ENCODE measurements at regions of chr22 and their contacts with region 1.

Region 1: GRCh38 chr22:22030493-22031182 is 48.1 kb upstream of the TOP3B start:
- DNase-seq: peak; percentile 80
- ATAC-seq: peak; percentile 80
- H3K4me3 ChIP-seq: peak overlapping the region in 4 of 5 experiments; percentile 31 to 51 (median 45)
- H3K4me3 Mint-ChIP-seq: peak overlapping the region; percentile 91
- H3K27ac ChIP-seq: peak overlapping the region; percentile 70 to 75
- H3K27ac Mint-ChIP-seq: peak overlapping the region; percentile 97
- H3K4me1 ChIP-seq: peaks cover 56 to 69% of the 10 kb centered on the region in 2 donors
- H3K4me1 Mint-ChIP-seq: peaks cover 77% of the 10 kb centered on the region
- H3K27me3 ChIP-seq: no peaks in the 10 kb centered on the region
- H3K27me3 Mint-ChIP-seq: no peaks in the 10 kb centered on the region
- CTCF ChIP-seq: peak; percentile 67

Region 2: DNA sequence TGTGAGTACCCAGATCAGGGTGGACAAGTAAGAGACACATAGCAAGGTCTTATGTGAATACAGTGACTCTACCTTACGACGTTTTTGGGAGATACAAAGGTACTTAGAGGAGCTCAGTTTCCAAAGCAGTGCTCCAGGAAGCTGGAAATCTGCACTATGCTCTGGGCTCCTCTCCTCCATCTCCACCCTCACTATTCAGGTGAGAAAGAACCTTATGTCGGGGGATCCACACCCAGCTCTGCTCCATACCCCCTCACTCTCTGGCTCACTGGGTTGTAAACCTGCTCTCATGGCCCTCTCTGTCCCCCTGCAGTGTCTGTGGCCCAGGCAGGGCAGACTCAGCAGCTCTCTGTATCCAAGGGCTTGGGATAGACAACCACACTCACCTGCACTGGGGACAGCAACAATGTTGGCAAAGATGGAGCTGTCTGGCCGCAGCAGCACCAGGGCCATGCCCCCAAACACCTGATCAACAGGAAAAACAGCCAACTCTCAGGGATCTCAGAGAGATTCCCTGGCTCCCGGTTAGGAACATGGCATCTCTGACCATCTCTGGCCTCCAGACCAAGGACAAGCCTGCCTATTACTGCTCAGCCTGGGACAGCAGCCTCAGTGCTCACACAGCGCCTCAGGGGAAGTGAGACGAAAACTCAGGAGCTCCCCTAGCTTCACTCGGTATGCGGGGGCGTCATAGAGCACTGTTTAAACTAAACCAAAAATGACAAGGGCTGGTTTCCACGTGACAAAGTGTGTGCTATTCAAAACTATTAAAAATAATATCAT is 12.8 kb after region 1 on chr22:
- CTCF ChIA-PET with region 1: interaction called, 79 read pairs
- POLR2A ChIA-PET with region 1: interaction called, 26 read pairs
- intact Hi-C with region 1: no loop called
- DNase-seq: peak; percentile 42
- ATAC-seq: peak; percentile 70
- H3K4me3 ChIP-seq: peak overlapping the region in 2 of 5 experiments; percentile 48 to 54
- H3K4me3 Mint-ChIP-seq: peak overlapping the region; percentile 67
- H3K27ac ChIP-seq: no peak overlapping the region
- H3K27ac Mint-ChIP-seq: peak overlapping the region; percentile 85
- H3K4me1 ChIP-seq: peaks cover 38 to 54% of the 10 kb centered on the region in 2 donors
- H3K4me1 Mint-ChIP-seq: peaks cover 75% of the 10 kb centered on the region
- H3K27me3 ChIP-seq: no peaks in the 10 kb centered on the region
- H3K27me3 Mint-ChIP-seq: no peaks in the 10 kb centered on the region
- CTCF ChIP-seq: no peak

Region 3: DNA sequence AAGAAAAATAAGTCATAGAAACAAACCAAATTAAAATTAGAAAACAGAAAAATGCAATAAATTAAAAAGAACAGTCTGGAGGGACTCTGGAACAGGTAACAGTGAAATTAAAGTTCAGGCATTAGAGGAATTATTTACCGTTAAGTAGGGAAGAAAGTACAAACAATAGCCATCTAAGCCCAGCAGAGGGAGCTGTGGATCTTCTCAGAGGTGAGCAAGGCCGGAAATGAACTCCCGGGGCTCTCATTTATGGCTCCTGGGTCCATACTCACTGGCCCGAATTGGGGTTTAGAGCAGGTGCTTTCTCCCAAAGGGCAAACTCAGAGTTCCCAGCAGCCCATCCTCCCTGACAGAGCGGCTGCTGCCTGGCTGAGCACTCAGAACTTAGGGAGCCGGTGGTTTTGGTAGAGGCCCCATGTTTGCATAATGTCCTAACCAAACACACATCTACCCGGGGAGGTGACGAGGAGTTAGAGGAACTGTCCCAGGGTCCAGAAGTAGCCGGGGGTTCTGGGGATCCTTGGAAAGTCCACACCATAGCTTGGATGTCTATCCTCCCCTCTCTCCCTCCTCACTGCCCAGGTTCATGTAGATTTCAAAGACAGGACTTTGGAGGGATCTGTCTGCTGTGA is 126.2 kb after region 1 on chr22:
- CTCF ChIA-PET with region 1: interaction called, 27 read pairs
- POLR2A ChIA-PET with region 1: interaction called, 6 read pairs
- intact Hi-C with region 1: loop called (anchors 1 kb)
- DNase-seq: peak; percentile 91
- ATAC-seq: peak; percentile 79
- H3K4me3 ChIP-seq: peak overlapping the region in 2 of 5 experiments; percentile 11 to 17
- H3K4me3 Mint-ChIP-seq: peak overlapping the region; percentile 86
- H3K27ac ChIP-seq: peak overlapping the region; percentile 92
- H3K27ac Mint-ChIP-seq: peak overlapping the region; percentile 99
- H3K4me1 ChIP-seq: peaks cover 42 to 53% of the 10 kb centered on the region in 2 donors
- H3K4me1 Mint-ChIP-seq: peaks cover 51% of the 10 kb centered on the region
- H3K27me3 ChIP-seq: no peaks in the 10 kb centered on the region
- H3K27me3 Mint-ChIP-seq: no peaks in the 10 kb centered on the region
- CTCF ChIP-seq: peak; percentile 92

Region 4: GRCh38 chr22:22195265-22196017 is 164.8 kb after region 1 on chr22:
- CTCF ChIA-PET with region 1: interaction called, 35 read pairs
- POLR2A ChIA-PET with region 1: interaction called, 5 read pairs
- intact Hi-C with region 1: loop called (anchors 2 kb)
- DNase-seq: peak; percentile 92
- ATAC-seq: peak; percentile 75
- H3K4me3 ChIP-seq: peak overlapping the region in 4 of 5 experiments; percentile 3 to 38 (median 28)
- H3K4me3 Mint-ChIP-seq: peak overlapping the region; percentile 82
- H3K27ac ChIP-seq: peak overlapping the region; percentile 54 to 75
- H3K27ac Mint-ChIP-seq: peak overlapping the region; percentile 91
- H3K4me1 ChIP-seq: peaks cover 41 to 46% of the 10 kb centered on the region in 2 donors
- H3K4me1 Mint-ChIP-seq: peaks cover 62% of the 10 kb centered on the region
- H3K27me3 ChIP-seq: no peaks in the 10 kb centered on the region
- H3K27me3 Mint-ChIP-seq: no peaks in the 10 kb centered on the region
- CTCF ChIP-seq: peak; percentile 93

Region 5: GRCh38 chr22:22235558-22235957 is 204.9 kb after region 1 on chr22:
- CTCF ChIA-PET with region 1: interaction called, 40 read pairs
- POLR2A ChIA-PET with region 1: no interaction called
- intact Hi-C with region 1: no loop called
- DNase-seq: peak; percentile 67
- ATAC-seq: peak; percentile 24
- H3K4me3 ChIP-seq: no peak overlapping the region
- H3K4me3 Mint-ChIP-seq: peak overlapping the region; percentile 37
- H3K27ac ChIP-seq: no peak overlapping the region
- H3K27ac Mint-ChIP-seq: peak overlapping the region; percentile 53
- H3K4me1 ChIP-seq: peaks cover 16 to 27% of the 10 kb centered on the region in 2 donors
- H3K4me1 Mint-ChIP-seq: peaks cover 24% of the 10 kb centered on the region
- H3K27me3 ChIP-seq: no peaks in the 10 kb centered on the region
- H3K27me3 Mint-ChIP-seq: no peaks in the 10 kb centered on the region
- CTCF ChIP-seq: peak; percentile 48

Measured in B cell (primary cell).